ENCODE measurements at regions of chr7 and their contacts with region 1.

Region 1: GRCh38 chr7:92447345-92448204 is at the start of gene GATAD1:
- DNase-seq: peak; percentile 63 to 91 (median 72)
- ATAC-seq: peak; percentile 56
- H3K4me3 ChIP-seq: peak within 1 kb of the TSS; percentile 85
- H3K4me3 Mint-ChIP-seq: peak within 1 kb of the TSS; percentile 96
- H3K27ac ChIP-seq: peak within 1 kb of the TSS; percentile 92 to 93
- H3K27ac Mint-ChIP-seq: peak within 1 kb of the TSS; percentile 94
- H3K4me1 ChIP-seq: peaks cover 13% of the 10 kb centered on the region
- H3K4me1 Mint-ChIP-seq: peaks cover 4% of the 10 kb centered on the region
- H3K27me3 ChIP-seq: no peaks in the 10 kb centered on the region
- H3K27me3 Mint-ChIP-seq: no peaks in the 10 kb centered on the region
- CTCF ChIP-seq: peak; percentile 95
- total RNA-seq, gene GATAD1: 12.0 to 13.5 TPM

Region 2: DNA sequence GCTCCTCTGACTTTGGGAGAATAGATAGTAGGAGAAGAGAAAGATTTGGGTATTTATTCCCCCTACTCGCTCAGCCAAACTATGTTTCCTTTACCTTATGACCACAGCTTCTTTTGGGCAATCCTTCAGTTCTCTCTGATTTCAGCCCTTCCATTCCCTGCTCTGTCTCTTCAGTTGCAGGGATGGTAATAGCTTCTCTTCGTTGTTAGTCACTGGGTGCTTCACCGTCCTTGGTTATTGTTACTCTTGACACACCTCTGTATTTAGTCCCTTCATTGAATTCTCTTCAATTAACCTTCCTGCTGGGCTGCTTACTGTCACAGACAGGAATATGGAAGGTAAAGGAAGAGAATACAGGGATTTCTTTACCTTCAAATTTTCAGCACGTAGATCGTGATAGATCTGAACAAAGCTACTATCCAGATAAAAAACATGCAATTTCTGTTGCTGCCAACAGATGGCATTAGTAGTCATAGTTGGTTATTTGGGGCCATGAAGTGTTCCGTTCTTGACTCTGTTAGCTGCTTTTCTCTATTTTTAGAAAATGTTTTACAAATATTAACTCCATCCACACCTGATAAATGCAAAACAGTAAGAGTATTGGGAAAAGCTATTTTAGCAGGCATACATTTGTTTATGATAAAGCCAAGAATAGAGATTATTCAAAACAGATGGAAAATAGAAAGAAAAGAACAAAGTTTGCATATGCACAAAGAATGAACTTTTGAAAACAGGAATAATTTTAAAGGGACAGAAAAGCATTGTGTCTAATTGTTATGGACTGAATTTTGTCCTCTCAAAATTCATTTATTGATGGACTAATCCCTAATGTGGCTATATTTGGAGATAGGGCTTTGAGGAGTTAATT is 1992.2 kb before region 1 on chr7:
- CTCF ChIA-PET with region 1: interaction called, 5 read pairs
- POLR2A ChIA-PET with region 1: no interaction called
- intact Hi-C with region 1: loop called in 1 of 2 experiments (anchors 10 kb)
- DNase-seq: peak in 3 of 14 experiments; percentile 52 to 60 (median 56)
- ATAC-seq: peak; percentile 72
- H3K4me3 ChIP-seq: no peak overlapping the region
- H3K4me3 Mint-ChIP-seq: no peak overlapping the region
- H3K27ac ChIP-seq: no peak overlapping the region
- H3K27ac Mint-ChIP-seq: no peak overlapping the region
- H3K4me1 ChIP-seq: no peaks in the 10 kb centered on the region
- H3K4me1 Mint-ChIP-seq: peaks cover 6% of the 10 kb centered on the region
- H3K27me3 ChIP-seq: no peaks in the 10 kb centered on the region
- H3K27me3 Mint-ChIP-seq: peaks cover 13% of the 10 kb centered on the region
- CTCF ChIP-seq: peak; percentile 67

Region 3: GRCh38 chr7:91880413-91881241 is 566.9 kb before region 1 on chr7 and contains the start of gene MTERF1:
- CTCF ChIA-PET with region 1: interaction called, 4 read pairs
- POLR2A ChIA-PET with region 1: interaction called, 20 read pairs
- intact Hi-C with region 1: loop called in 1 of 2 experiments (anchors 2 kb)
- DNase-seq: peak; percentile 88 to 97 (median 92)
- ATAC-seq: peak; percentile 95
- H3K4me3 ChIP-seq: peak within 1 kb of the TSS; percentile 78
- H3K4me3 Mint-ChIP-seq: peak within 1 kb of the TSS; percentile 96
- H3K27ac ChIP-seq: peak within 1 kb of the TSS; percentile 26 to 64
- H3K27ac Mint-ChIP-seq: peak within 1 kb of the TSS; percentile 87
- H3K4me1 ChIP-seq: peaks cover 20% of the 10 kb centered on the region
- H3K4me1 Mint-ChIP-seq: peaks cover 41% of the 10 kb centered on the region
- H3K27me3 ChIP-seq: no peaks in the 10 kb centered on the region
- H3K27me3 Mint-ChIP-seq: no peaks in the 10 kb centered on the region
- CTCF ChIP-seq: peak; percentile 98
- total RNA-seq, gene MTERF1: 11.0 to 11.9 TPM

Region 4: GRCh38 chr7:91894781-91895480 is 552.6 kb before region 1 on chr7:
- CTCF ChIA-PET with region 1: no interaction called
- POLR2A ChIA-PET with region 1: no interaction called
- intact Hi-C with region 1: no loop called
- DNase-seq: no peak
- ATAC-seq: no peak
- H3K4me3 ChIP-seq: no peak overlapping the region
- H3K4me3 Mint-ChIP-seq: no peak overlapping the region
- H3K27ac ChIP-seq: no peak overlapping the region
- H3K27ac Mint-ChIP-seq: no peak overlapping the region
- H3K4me1 ChIP-seq: no peaks in the 10 kb centered on the region
- H3K4me1 Mint-ChIP-seq: no peaks in the 10 kb centered on the region
- H3K27me3 ChIP-seq: peaks cover 0 to 11% of the 10 kb centered on the region in 2 experiments
- H3K27me3 Mint-ChIP-seq: peaks cover 21% of the 10 kb centered on the region
- CTCF ChIP-seq: no peak

Region 5: GRCh38 chr7:92178927-92179924 is 268.3 kb before region 1 on chr7 and contains the start of gene LRRD1:
- CTCF ChIA-PET with region 1: interaction called, 3 read pairs
- POLR2A ChIA-PET with region 1: interaction called, 6 read pairs
- intact Hi-C with region 1: loop called in 1 of 2 experiments (anchors 5 kb)
- DNase-seq: peak; percentile 78 to 93 (median 88)
- ATAC-seq: peak; percentile 99
- H3K4me3 ChIP-seq: peak within 1 kb of the TSS; percentile 58
- H3K4me3 Mint-ChIP-seq: peak within 1 kb of the TSS; percentile 84
- H3K27ac ChIP-seq: no peak within 1 kb of the TSS
- H3K27ac Mint-ChIP-seq: no peak within 1 kb of the TSS
- H3K4me1 ChIP-seq: peaks cover 11% of the 10 kb centered on the region
- H3K4me1 Mint-ChIP-seq: peaks cover 14% of the 10 kb centered on the region
- H3K27me3 ChIP-seq: peaks cover 0 to 2% of the 10 kb centered on the region in 2 experiments
- H3K27me3 Mint-ChIP-seq: peaks cover 7% of the 10 kb centered on the region
- CTCF ChIP-seq: peak; percentile 98
- total RNA-seq, gene LRRD1: not detected

Region 6: DNA sequence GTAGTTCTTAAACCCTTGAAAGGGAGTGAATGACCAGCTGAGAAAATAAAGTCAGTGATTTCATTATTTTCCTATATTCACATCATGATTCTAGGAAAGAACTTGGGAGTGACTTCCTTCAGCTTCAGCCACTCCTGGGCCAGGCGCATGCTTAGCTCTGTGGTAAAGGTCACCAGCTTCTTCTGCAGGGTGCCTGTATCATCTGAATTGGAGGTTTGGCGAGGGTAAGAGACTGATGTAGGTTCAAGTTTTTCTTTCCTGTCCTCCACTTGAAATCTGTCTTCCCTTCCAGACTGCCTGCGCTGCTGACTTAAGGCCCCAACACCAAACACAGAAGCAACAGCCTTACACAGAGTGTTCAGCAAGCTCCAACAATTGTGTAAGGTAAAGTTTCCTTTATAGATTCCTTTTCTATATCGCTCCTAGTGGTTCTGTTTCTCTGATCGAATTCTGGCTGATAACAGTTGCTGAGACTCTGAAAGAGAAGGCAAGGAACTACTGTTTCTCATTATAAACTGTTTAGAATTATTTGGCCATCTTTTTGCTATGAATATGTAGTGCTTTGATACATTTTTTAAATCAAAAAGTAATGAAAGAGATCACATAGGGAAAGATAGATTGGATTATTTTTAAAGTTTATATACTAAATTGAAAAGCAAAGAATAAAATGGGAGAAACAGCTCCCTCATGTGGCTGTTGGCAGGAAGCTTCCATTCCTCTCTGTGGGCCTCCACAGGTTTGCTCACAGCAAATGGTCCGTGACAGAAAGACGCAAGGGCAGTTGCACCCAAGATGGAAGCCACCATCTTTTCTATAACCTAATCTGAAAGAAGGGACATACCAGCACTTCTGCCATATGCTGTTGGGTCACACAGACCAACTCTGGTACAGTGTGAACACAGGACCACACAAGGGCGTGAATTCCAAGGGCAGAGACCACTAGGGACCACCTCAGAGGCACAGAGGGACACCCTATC is 13.7 kb after region 1 on chr7:
- CTCF ChIA-PET with region 1: interaction called, 11 read pairs
- POLR2A ChIA-PET with region 1: interaction called, 18 read pairs
- intact Hi-C with region 1: no loop called
- DNase-seq: peak in 11 of 14 experiments; percentile 1 to 58 (median 11)
- ATAC-seq: peak; percentile 63
- H3K4me3 ChIP-seq: no peak overlapping the region
- H3K4me3 Mint-ChIP-seq: no peak overlapping the region
- H3K27ac ChIP-seq: no peak overlapping the region
- H3K27ac Mint-ChIP-seq: no peak overlapping the region
- H3K4me1 ChIP-seq: no peaks in the 10 kb centered on the region
- H3K4me1 Mint-ChIP-seq: no peaks in the 10 kb centered on the region
- H3K27me3 ChIP-seq: no peaks in the 10 kb centered on the region
- H3K27me3 Mint-ChIP-seq: no peaks in the 10 kb centered on the region
- CTCF ChIP-seq: peak; percentile 79

Region 7: DNA sequence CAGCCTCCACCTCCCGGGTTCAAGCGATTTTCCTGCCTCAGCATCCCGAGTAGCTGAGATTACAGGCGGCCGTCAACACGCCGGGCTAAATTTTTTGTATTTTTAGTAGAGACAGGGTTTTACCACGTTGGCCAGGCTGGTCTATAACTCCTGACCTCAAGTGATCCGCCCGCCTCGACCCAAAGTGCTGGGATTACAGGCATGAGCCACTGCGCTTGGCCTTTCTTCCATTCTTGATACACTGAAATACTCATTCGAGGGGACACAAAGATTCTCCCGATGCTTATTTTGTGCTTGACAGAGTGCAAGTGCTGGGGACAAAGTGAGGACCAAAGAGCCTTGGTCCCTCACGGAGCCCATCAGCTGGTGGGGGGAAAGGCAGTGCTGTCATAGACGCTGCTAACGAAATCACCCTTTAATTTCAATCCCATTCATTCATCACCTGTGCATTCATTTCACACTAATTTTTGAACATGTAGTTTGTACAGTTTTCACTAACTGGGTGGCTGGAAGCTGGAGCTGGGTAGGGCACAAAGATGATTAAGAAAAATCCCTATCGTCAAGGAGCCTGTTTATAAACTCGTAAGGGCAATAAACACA is 143.2 kb after region 1 on chr7:
- CTCF ChIA-PET with region 1: interaction called, 3 read pairs
- POLR2A ChIA-PET with region 1: interaction called, 18 read pairs
- intact Hi-C with region 1: loop called in 1 of 2 experiments (anchors 2 kb)
- DNase-seq: peak in 3 of 14 experiments; percentile 6 to 24 (median 7)
- ATAC-seq: no peak
- H3K4me3 ChIP-seq: peak overlapping the region; percentile 85
- H3K4me3 Mint-ChIP-seq: peak overlapping the region; percentile 91
- H3K27ac ChIP-seq: no peak overlapping the region
- H3K27ac Mint-ChIP-seq: peak overlapping the region; percentile 95
- H3K4me1 ChIP-seq: peaks cover 30% of the 10 kb centered on the region
- H3K4me1 Mint-ChIP-seq: peaks cover 52% of the 10 kb centered on the region
- H3K27me3 ChIP-seq: no peaks in the 10 kb centered on the region
- H3K27me3 Mint-ChIP-seq: no peaks in the 10 kb centered on the region
- CTCF ChIP-seq: no peak

Measured in CD4-positive, alpha-beta T cell (primary cell).